ENCODE measurements at regions of chr1 and their contacts with region 1.

Region 1: DNA sequence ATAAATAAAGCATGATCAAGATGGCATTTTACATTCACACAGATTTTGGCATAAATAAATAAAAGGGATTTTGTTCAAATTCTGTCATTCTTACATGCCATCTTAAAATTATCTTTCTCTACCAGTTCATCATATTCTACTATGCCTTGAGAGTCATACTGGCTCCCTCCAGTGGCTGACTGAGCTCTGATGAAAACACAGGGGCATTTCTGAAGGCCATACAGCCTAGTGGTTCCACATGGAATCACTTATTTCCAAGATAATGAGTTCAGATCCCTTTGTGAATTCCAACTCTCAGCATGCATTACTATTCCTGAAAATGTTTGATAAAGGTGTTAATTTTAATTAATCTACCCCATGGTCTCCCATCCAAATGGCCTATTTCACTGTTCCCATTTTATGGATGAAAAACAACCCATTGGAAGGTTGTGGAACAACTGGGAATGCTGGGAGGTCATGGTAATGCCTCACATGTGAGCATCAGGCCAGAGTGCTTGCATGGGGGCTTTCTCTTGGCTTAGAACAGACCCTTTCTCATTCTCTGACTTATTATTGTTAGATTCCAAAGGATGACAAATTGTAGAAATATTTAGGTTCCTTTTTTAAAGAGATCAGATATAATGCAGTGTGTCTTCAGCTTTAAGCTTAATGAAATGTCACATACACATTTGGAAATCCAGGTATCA is 622.4 kb upstream of the PKN2 start:
- DNase-seq: peak; percentile 75
- H3K4me3 ChIP-seq: no peak overlapping the region
- H3K27ac ChIP-seq: peak overlapping the region; percentile 19
- H3K4me1 ChIP-seq: peaks cover 24% of the 10 kb centered on the region
- H3K27me3 ChIP-seq: no peaks in the 10 kb centered on the region
- CTCF ChIP-seq: peak; percentile 92 to 94

Region 2: DNA sequence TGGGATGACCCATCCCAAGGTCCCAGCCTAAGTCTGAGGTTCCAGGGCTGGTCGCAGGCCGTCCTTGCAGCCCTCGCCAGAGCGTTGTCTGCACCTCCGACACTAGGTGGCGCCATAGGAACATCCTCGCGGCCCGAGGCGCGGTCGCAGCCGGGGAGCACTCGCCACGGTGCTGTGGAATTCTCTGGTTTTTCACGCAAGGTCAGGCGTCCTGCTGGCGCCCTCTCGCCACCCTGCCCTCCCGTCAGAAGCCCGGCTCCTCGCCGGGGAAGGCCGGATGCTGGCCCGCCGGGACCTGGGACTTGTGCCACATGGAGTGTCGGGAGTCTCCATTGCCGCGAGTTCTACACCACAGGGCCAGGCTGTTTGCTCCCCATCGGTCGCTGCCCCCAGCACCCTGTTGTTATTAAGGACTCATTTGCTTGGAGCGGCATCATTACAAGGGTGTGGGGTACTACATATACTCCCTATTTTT is 929.8 kb before region 1 on chr1:
- CTCF ChIA-PET with region 1: no interaction called
- dilution Hi-C with region 1: no loop called
- in situ Hi-C with region 1: no loop called
- intact Hi-C with region 1: loop called (anchors 1 kb)
- DNase-seq: peak; percentile 54
- H3K4me3 ChIP-seq: peak overlapping the region; percentile 4 to 63 (median 40)
- H3K27ac ChIP-seq: no peak overlapping the region
- H3K4me1 ChIP-seq: peaks cover 23% of the 10 kb centered on the region
- H3K27me3 ChIP-seq: no peaks in the 10 kb centered on the region
- CTCF ChIP-seq: peak; percentile 82 to 97

Region 3: GRCh38 chr1:87328272-87329050 is 733.2 kb before region 1 on chr1 and contains the start of gene LMO4:
- CTCF ChIA-PET with region 1: interaction called, 5 read pairs
- dilution Hi-C with region 1: no loop called
- in situ Hi-C with region 1: loop called in 1 of 2 experiments (anchors 25 kb)
- intact Hi-C with region 1: loop called (anchors 1 kb)
- DNase-seq: peak; percentile 98
- H3K4me3 ChIP-seq: peak within 1 kb of the TSS; percentile 72 to 92 (median 82)
- H3K27ac ChIP-seq: peak within 1 kb of the TSS; percentile 83
- H3K4me1 ChIP-seq: peaks cover 16% of the 10 kb centered on the region
- H3K27me3 ChIP-seq: no peaks in the 10 kb centered on the region
- CTCF ChIP-seq: no peak
- total RNA-seq, gene LMO4: 40.2 to 44.7 TPM

Region 4: DNA sequence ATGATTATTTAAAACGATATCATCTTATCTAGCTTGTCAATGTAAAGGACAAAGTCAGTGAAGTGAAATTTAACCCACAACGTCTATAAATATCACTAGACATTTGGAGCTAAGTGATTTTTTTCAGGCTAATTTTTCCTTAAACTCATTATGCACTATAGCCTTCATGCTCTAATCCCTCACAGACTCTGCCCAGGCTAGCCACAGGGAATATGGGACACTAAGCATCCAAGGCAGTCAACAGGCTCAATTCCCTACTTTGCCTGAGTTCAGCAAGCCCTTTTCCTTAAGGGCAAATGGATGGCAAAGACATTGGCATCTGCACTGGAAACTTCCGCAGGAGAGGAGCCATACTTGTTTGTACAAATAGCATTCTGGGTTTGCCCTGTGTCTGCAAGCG is 156.0 kb before region 1 on chr1:
- CTCF ChIA-PET with region 1: interaction called, 19 read pairs
- dilution Hi-C with region 1: no loop called
- in situ Hi-C with region 1: no loop called
- intact Hi-C with region 1: no loop called
- DNase-seq: no peak
- H3K4me3 ChIP-seq: no peak overlapping the region
- H3K27ac ChIP-seq: no peak overlapping the region
- H3K4me1 ChIP-seq: no peaks in the 10 kb centered on the region
- H3K27me3 ChIP-seq: no peaks in the 10 kb centered on the region
- CTCF ChIP-seq: no peak

Region 5: GRCh38 chr1:88001460-88001859 is 60.2 kb before region 1 on chr1:
- CTCF ChIA-PET with region 1: no interaction called
- dilution Hi-C with region 1: no loop called
- in situ Hi-C with region 1: no loop called
- intact Hi-C with region 1: loop called (anchors 5 kb)
- DNase-seq: peak; percentile 61
- H3K4me3 ChIP-seq: no peak overlapping the region
- H3K27ac ChIP-seq: no peak overlapping the region
- H3K4me1 ChIP-seq: peaks cover 11% of the 10 kb centered on the region
- H3K27me3 ChIP-seq: no peaks in the 10 kb centered on the region
- CTCF ChIP-seq: no peak

Measured in mammary epithelial cell (primary cell).